ENCODE measurements at regions of chr20 and their contacts with region 1.

Region 1: GRCh38 chr20:3312940-3313682 is 74.1 kb upstream of the SLC4A11 start:
- DNase-seq: peak; percentile 95
- H3K4me3 Mint-ChIP-seq: peak overlapping the region; percentile 61
- H3K27ac Mint-ChIP-seq: peak overlapping the region; percentile 95
- H3K4me1 Mint-ChIP-seq: peaks cover 39% of the 10 kb centered on the region
- H3K27me3 Mint-ChIP-seq: no peaks in the 10 kb centered on the region
- CTCF ChIP-seq: no peak

Region 2: GRCh38 chr20:3051385-3052019 is 261.6 kb before region 1 on chr20:
- CTCF ChIA-PET with region 1: interaction called, 44 read pairs
- POLR2A ChIA-PET with region 1: interaction called, 5 read pairs
- intact Hi-C with region 1: loop called (anchors 2 kb)
- DNase-seq: no peak
- H3K4me3 Mint-ChIP-seq: no peak overlapping the region
- H3K27ac Mint-ChIP-seq: no peak overlapping the region
- H3K4me1 Mint-ChIP-seq: peaks cover 6% of the 10 kb centered on the region
- H3K27me3 Mint-ChIP-seq: no peaks in the 10 kb centered on the region
- CTCF ChIP-seq: no peak

Region 3: GRCh38 chr20:3156811-3157619 is 156.1 kb before region 1 on chr20:
- CTCF ChIA-PET with region 1: interaction called, 4 read pairs
- POLR2A ChIA-PET with region 1: interaction called, 12 read pairs
- intact Hi-C with region 1: no loop called
- DNase-seq: no peak
- H3K4me3 Mint-ChIP-seq: peak overlapping the region; percentile 92
- H3K27ac Mint-ChIP-seq: peak overlapping the region; percentile 99
- H3K4me1 Mint-ChIP-seq: peaks cover 19% of the 10 kb centered on the region
- H3K27me3 Mint-ChIP-seq: no peaks in the 10 kb centered on the region
- CTCF ChIP-seq: no peak

Region 4: GRCh38 chr20:3209257-3209945 is 103.7 kb before region 1 on chr20 and contains the start of gene ITPA:
- CTCF ChIA-PET with region 1: interaction called, 192 read pairs
- POLR2A ChIA-PET with region 1: interaction called, 37 read pairs
- intact Hi-C with region 1: no loop called
- DNase-seq: peak; percentile 49
- H3K4me3 Mint-ChIP-seq: peak within 1 kb of the TSS; percentile 100
- H3K27ac Mint-ChIP-seq: peak within 1 kb of the TSS; percentile 99
- H3K4me1 Mint-ChIP-seq: no peaks in the 10 kb centered on the region
- H3K27me3 Mint-ChIP-seq: no peaks in the 10 kb centered on the region
- CTCF ChIP-seq: no peak
- total RNA-seq, gene ITPA: 69.4 and 97.1 TPM in 2 replicates

Region 5: DNA sequence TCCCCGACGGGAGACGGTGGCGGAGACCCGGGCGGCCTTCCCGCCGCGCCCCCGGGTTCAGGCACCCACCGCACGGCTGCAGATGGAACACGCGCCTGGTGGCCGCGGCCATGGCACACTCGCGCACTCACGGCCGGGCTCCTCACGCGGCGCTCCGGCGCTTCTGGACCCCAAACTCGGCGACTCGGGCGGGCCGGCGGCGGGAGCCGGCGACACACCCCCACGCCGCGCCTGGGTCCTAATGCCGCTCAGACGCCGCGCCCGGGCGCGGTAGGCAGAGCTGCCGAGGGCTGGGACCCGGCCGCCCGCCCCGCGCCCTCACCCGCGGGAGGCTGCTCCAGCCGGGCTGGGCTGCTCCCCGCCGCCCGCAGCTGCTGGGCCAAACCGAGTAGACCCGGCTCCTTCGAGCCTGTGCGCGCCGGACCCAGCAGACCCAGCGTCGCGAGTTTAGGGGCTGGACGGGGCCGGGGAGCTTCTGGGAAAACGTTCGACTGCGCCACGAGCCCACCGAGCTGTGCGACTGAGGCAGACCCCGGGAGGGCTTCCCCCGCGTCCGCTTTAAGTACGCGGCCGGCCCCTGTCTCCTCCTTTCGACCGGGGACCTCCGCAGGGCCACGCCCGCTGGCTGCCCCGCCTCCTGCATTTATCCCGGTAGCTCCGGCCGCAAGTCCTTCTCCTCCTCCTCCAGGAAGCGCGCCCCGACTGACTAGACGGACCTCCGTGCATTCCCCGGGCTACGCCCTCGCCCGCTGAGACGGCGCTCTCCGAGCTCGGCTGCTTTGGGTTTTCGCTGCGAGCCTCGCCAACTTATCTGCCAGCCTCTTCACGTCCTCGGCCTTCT is 73.9 kb before region 1 on chr20 and contains the start of gene SLC4A11:
- CTCF ChIA-PET with region 1: interaction called, 9 read pairs
- POLR2A ChIA-PET with region 1: interaction called, 26 read pairs
- intact Hi-C with region 1: loop called (anchors 5 kb)
- DNase-seq: peak; percentile 73
- H3K4me3 Mint-ChIP-seq: peak within 1 kb of the TSS; percentile 86
- H3K27ac Mint-ChIP-seq: no peak within 1 kb of the TSS
- H3K4me1 Mint-ChIP-seq: peaks cover 35% of the 10 kb centered on the region
- H3K27me3 Mint-ChIP-seq: no peaks in the 10 kb centered on the region
- CTCF ChIP-seq: no peak
- total RNA-seq, gene SLC4A11: 4.1 and 5.7 TPM in 2 replicates

Region 6: DNA sequence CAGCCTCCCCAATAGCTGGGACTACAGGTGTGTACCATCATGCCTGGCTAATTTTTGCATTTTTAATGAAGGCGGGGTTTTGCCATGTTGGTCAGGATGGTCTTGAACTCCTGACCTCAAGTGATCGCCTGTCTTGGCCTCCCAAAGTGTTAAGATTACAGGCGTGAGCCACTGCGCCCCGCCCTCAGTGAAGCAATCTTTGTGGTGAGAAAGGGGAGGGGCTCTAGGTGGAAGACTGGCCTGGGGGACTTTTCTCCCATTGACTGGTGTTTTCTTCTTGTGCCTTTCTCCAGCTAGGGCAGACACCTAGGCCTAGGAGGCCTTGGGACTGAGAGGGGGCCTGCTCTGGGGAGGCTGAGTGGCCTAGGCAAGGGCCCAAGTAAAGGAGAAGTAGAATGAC is 10.3 kb after region 1 on chr20:
- CTCF ChIA-PET with region 1: interaction called, 16 read pairs
- POLR2A ChIA-PET with region 1: interaction called, 18 read pairs
- intact Hi-C with region 1: no loop called
- DNase-seq: peak; percentile 79
- H3K4me3 Mint-ChIP-seq: no peak overlapping the region
- H3K27ac Mint-ChIP-seq: no peak overlapping the region
- H3K4me1 Mint-ChIP-seq: peaks cover 5% of the 10 kb centered on the region
- H3K27me3 Mint-ChIP-seq: no peaks in the 10 kb centered on the region
- CTCF ChIP-seq: no peak

Region 7: DNA sequence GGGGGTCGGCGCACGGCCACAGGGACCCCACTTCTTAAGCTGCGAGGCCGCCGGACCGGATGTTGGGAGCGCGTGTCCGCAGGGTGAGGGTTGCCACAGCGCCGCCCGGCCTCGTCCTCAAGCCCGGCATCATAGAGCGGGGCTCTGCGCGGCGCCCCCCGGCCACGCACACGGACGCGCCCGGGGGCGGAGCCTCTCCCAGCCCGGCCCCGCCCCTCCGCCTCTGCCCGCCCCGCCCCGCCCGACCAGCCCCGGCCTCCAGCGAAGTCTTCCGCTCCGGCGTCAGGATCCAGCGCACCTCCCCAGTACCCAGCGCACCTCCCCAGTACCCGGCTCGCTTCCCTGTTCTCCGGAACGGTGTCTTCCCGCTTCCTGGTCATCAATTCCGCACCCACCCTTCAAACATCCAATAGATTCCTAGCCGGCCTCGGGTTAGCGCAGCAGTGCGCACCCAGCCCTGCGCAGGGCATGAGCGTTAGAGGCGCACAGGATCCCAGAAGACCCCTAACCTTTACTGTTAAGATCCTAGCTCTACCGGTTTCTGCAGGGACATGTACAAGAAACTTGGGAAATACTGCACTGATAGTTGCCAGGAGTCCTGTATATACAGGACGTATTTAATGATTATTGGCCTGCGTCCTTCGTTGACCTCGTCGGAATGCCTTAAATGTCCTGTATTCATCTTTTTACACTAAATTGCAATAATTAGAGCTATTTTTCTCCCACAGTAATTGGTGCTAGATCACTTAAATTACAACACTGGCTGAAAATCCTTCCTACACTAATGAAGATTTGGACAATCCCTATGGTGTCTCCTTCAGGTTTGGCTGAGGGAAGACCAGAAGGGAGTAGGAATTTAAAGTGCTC is 94.9 kb after region 1 on chr20:
- CTCF ChIA-PET with region 1: interaction called, 5 read pairs
- POLR2A ChIA-PET with region 1: interaction called, 15 read pairs
- intact Hi-C with region 1: no loop called
- DNase-seq: peak; percentile 84
- H3K4me3 Mint-ChIP-seq: peak overlapping the region; percentile 90
- H3K27ac Mint-ChIP-seq: peak overlapping the region; percentile 75
- H3K4me1 Mint-ChIP-seq: peaks cover 22% of the 10 kb centered on the region
- H3K27me3 Mint-ChIP-seq: no peaks in the 10 kb centered on the region
- CTCF ChIP-seq: no peak